ENCODE measurements at regions of chr16 and their contacts with region 1.

Region 1: GRCh38 chr16:29848420-29849297 is 14.4 kb downstream of the CDIPT start:
- DNase-seq: peak; percentile 65 to 70
- H3K4me3 ChIP-seq: no peak overlapping the region
- H3K4me3 Mint-ChIP-seq: no peak overlapping the region
- H3K27ac Mint-ChIP-seq: no peak overlapping the region
- H3K4me1 ChIP-seq: peaks cover 7% of the 10 kb centered on the region; the same call in 1 of the 2 replicates
- H3K4me1 Mint-ChIP-seq: peaks cover 6% of the 10 kb centered on the region
- H3K27me3 ChIP-seq: no peaks in the 10 kb centered on the region
- H3K27me3 Mint-ChIP-seq: no peaks in the 10 kb centered on the region
- CTCF ChIP-seq: peak; percentile 55 to 73

Region 2: GRCh38 chr16:29805378-29806098 is 43.1 kb before region 1 on chr16:
- CTCF ChIA-PET with region 1: interaction called, 26 read pairs
- POLR2A ChIA-PET with region 1: no interaction called
- intact Hi-C with region 1: no loop called
- DNase-seq: peak; percentile 96 to 97
- H3K4me3 ChIP-seq: peak overlapping the region; percentile 59
- H3K4me3 Mint-ChIP-seq: peak overlapping the region; percentile 79
- H3K27ac Mint-ChIP-seq: peak overlapping the region; percentile 92
- H3K4me1 ChIP-seq: peaks cover 20% of the 10 kb centered on the region; the same call in 1 of the 2 replicates
- H3K4me1 Mint-ChIP-seq: peaks cover 26% of the 10 kb centered on the region
- H3K27me3 ChIP-seq: no peaks in the 10 kb centered on the region
- H3K27me3 Mint-ChIP-seq: no peaks in the 10 kb centered on the region
- CTCF ChIP-seq: no peak

Region 3: GRCh38 chr16:29825145-29826044 is 23.3 kb before region 1 on chr16:
- CTCF ChIA-PET with region 1: interaction called, 24 read pairs
- POLR2A ChIA-PET with region 1: interaction called, 7 read pairs
- intact Hi-C with region 1: no loop called
- DNase-seq: no peak
- H3K4me3 ChIP-seq: no peak overlapping the region
- H3K4me3 Mint-ChIP-seq: no peak overlapping the region
- H3K27ac Mint-ChIP-seq: peak overlapping the region; percentile 53
- H3K4me1 ChIP-seq: peaks cover 53% of the 10 kb centered on the region
- H3K4me1 Mint-ChIP-seq: peaks cover 21% of the 10 kb centered on the region
- H3K27me3 ChIP-seq: no peaks in the 10 kb centered on the region
- H3K27me3 Mint-ChIP-seq: no peaks in the 10 kb centered on the region
- CTCF ChIP-seq: no peak

Measured in Caco-2 (cell line).